ENCODE measurements at regions of chr7 and their contacts with region 1.

Region 1: GRCh38 chr7:149742075-149742701 is 31.2 kb downstream of the ZNF467 start:
- DNase-seq: no peak
- ATAC-seq: peak; percentile 95
- H3K4me3 ChIP-seq: peak overlapping the region; percentile 43; the same call in 1 of the 2 replicates
- H3K27ac ChIP-seq: no peak overlapping the region
- H3K4me1 ChIP-seq: peaks cover 5% of the 10 kb centered on the region; the same call in 1 of the 2 replicates
- H3K27me3 ChIP-seq: no peaks in the 10 kb centered on the region; a peak in 2 of 4 replicates
- CTCF ChIP-seq: peak; percentile 88 to 95 (median 91)
- EP300 ChIP-seq: no peak
- POLR2A ChIP-seq: no peak
- RAD21 ChIP-seq: peak; percentile 84

Region 2: GRCh38 chr7:149317986-149318672 is 424.1 kb before region 1 on chr7:
- CTCF ChIA-PET with region 1: no interaction called
- POLR2A ChIA-PET with region 1: no interaction called
- RAD21 ChIA-PET with region 1: no interaction called
- SMC1A ChIA-PET with region 1: no interaction called
- in situ Hi-C with region 1: no loop called
- intact Hi-C with region 1: no loop called
- DNase-seq: no peak
- ATAC-seq: no peak
- H3K4me3 ChIP-seq: no peak overlapping the region
- H3K27ac ChIP-seq: no peak overlapping the region
- H3K4me1 ChIP-seq: peaks cover 3% of the 10 kb centered on the region; the same call in 1 of the 2 replicates
- H3K27me3 ChIP-seq: no peaks in the 10 kb centered on the region
- CTCF ChIP-seq: peak in 2 of 3 experiments; percentile 4 to 20; a peak in 1 of 6 replicates
- EP300 ChIP-seq: no peak
- POLR2A ChIP-seq: no peak
- RAD21 ChIP-seq: no peak

Region 3: DNA sequence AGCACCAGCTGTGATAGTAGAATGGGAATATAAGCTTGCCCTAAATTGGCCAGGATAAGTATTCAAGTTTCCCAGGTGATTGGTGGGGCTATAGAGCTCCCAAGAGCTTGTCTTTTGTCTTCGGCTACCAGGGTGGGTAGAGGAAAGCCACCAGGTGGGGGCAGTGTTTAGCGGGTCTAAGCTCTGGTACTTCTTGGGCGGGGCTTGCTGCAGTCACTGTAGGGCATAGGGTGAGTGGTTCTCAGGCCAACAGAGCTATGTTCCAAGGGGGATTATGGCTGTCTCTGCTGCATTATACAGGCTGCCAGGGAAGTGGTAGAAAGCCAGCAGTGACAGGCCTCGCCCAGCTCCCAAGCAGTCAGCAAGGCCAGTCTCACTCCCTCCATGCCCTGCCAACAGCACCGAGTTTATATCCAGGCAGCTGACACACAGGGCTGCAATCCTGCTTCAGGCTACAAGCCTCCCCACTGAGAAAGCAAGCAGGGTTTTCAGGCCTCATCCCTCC is 79.5 kb before region 1 on chr7:
- CTCF ChIA-PET with region 1: interaction called, 301 read pairs
- POLR2A ChIA-PET with region 1: interaction called, 5 read pairs
- RAD21 ChIA-PET with region 1: interaction called, 180 read pairs
- SMC1A ChIA-PET with region 1: interaction called, 104 read pairs
- in situ Hi-C with region 1: loop called (anchors 10 kb)
- intact Hi-C with region 1: loop called (anchors 1 kb)
- DNase-seq: peak; percentile 8
- ATAC-seq: peak; percentile 100
- H3K4me3 ChIP-seq: no peak overlapping the region
- H3K27ac ChIP-seq: no peak overlapping the region
- H3K4me1 ChIP-seq: no peaks in the 10 kb centered on the region
- H3K27me3 ChIP-seq: no peaks in the 10 kb centered on the region; a peak in 1 of 4 replicates
- CTCF ChIP-seq: peak; percentile 65 to 77 (median 75)
- EP300 ChIP-seq: no peak
- POLR2A ChIP-seq: no peak
- RAD21 ChIP-seq: peak; percentile 73

Region 4: DNA sequence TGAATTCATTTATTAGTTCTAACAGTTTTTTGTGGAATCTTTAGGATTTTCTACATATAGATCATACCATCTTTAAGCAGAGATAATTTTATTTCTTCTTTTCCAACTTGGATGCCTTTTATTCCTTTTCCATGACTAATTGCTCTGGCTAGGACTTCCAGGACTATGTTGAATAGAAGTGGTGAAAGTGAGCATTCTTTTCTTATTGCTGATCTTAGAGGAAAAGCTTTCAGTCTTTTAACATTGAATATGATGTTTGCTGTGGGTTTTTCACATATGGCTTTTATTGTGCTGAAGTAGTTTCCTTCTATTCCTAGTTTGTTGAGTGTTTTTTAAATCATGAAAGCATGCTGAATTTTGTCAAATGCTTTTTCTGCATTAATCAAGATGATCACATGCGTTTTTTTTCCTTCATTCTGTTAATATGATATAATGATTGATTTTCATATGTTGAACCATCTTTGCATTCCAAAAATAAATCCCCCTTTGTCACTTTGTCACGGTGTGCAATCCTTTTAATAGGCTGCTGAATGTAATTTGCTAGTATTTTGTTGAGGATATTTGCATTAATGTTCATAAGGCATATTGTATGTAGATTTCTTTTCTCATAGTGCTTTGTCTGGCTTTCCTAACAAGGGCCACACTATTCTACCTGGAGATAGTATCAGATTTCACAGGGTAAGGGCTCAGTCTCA is 61.7 kb before region 1 on chr7:
- CTCF ChIA-PET with region 1: interaction called, 14 read pairs
- POLR2A ChIA-PET with region 1: no interaction called
- RAD21 ChIA-PET with region 1: interaction called, 6 read pairs
- SMC1A ChIA-PET with region 1: interaction called, 5 read pairs
- in situ Hi-C with region 1: no loop called
- intact Hi-C with region 1: no loop called
- DNase-seq: no peak
- ATAC-seq: no peak
- H3K4me3 ChIP-seq: no peak overlapping the region
- H3K27ac ChIP-seq: no peak overlapping the region
- H3K4me1 ChIP-seq: no peaks in the 10 kb centered on the region
- H3K27me3 ChIP-seq: no peaks in the 10 kb centered on the region; a peak in 1 of 4 replicates
- CTCF ChIP-seq: no peak
- EP300 ChIP-seq: no peak
- POLR2A ChIP-seq: no peak
- RAD21 ChIP-seq: no peak

Region 5: DNA sequence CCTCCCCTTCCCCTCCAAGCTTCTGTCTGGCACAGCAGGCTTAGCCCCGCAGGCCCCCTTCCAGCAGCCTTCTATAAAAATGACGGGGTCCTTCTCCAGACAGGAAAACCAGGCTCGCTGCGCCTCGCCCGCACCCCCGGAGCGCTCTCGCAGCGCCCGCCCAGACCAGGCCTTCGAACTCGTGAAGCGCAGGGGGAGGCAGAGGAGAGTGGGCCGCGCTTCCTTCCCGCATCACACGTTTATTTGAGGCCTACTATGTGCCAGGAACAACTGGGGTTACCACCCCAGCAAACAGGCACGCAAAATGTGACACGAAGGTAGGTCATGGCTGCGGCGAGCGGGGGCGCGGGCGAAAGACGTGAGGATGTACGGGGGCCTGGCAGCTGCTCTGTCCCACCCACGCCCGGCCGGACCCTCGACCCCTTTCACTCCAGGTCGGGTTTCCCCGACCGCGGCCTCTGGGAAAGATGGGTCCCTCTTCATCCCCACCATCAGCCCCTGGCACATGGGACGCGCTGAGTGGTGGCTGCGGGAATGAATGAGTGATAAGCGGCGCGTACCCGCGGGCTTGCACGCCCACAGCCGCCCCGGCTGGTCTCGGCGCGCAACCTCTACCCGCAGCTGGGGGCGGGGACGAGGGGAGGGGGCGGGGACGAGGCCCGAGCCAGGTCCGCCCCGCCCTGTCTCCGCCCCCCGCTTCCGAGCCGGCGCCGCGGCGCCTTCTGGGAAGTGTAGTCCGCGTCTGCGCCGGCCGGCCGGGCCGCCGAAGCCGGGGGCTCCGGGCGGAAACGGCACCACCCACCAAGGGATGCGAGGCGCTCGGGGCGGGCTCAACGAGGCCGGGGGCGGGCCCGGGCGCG is 27.9 kb before region 1 on chr7:
- CTCF ChIA-PET with region 1: interaction called, 15 read pairs
- POLR2A ChIA-PET with region 1: no interaction called
- RAD21 ChIA-PET with region 1: interaction called, 4 read pairs
- SMC1A ChIA-PET with region 1: interaction called, 10 read pairs
- in situ Hi-C with region 1: no loop called
- intact Hi-C with region 1: no loop called
- DNase-seq: peak; percentile 32
- ATAC-seq: peak; percentile 95
- H3K4me3 ChIP-seq: peak overlapping the region; percentile 91; the same call in 1 of the 2 replicates
- H3K27ac ChIP-seq: peak overlapping the region; percentile 29; the same call in 1 of the 2 replicates
- H3K4me1 ChIP-seq: peaks cover 9% of the 10 kb centered on the region
- H3K27me3 ChIP-seq: no peaks in the 10 kb centered on the region
- CTCF ChIP-seq: no peak
- EP300 ChIP-seq: no peak
- POLR2A ChIP-seq: peak; percentile 41
- RAD21 ChIP-seq: no peak

Measured in GM12878 (cell line).